ENCODE measurements at regions of chr7 and their contacts with region 1.

Region 1: GRCh38 chr7:63900394-63901203 is 98.0 kb upstream of the ZNF722 start:
- DNase-seq: peak; percentile 90
- H3K4me3 Mint-ChIP-seq: peak overlapping the region; percentile 87
- H3K27ac Mint-ChIP-seq: peak overlapping the region; percentile 80
- H3K4me1 Mint-ChIP-seq: no peaks in the 10 kb centered on the region
- H3K27me3 Mint-ChIP-seq: no peaks in the 10 kb centered on the region

Region 2: DNA sequence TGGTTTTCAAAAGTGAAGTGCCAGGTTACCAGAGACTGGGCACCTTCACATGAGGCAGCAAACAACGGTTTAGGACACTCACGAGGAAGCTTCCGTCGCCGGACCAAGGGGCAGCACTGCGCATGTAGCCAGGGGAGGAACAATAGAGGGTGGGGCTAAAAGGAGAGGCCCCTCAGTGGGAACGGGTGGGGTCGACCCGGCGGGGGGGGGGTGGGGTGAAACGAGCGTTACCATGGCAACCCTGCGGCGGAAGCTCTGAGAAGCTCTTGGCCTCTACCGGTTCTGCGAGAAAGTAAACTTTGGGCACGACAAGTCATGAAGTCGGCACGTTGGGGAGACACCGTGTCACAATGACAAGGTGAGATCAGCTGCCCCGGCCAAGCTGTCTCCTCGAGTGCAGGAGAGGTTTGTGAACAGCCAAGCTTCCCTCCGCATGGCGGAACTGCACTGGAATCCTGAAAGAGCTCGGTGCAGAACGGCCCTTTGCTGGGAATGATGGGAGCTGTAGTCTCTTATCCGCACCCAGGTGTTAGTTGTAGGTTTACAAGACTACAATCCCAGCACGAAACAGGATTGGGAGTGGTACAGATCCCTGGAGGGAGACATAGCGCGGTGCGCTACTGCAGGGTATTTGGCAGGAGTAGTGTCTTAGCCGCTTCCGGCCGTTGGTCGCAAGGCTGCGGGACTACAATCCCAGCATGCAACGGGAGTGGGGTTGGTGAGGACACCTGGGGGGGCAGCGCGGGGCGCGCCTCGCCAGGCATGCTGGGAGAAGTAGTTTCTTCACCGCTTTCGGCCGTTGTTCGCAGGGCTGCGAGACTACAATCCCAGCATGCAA is 25.2 kb after region 1 on chr7:
- intact Hi-C with region 1: loop called (anchors 1 kb)
- DNase-seq: peak; percentile 94
- H3K4me3 Mint-ChIP-seq: peak overlapping the region; percentile 87
- H3K27ac Mint-ChIP-seq: peak overlapping the region; percentile 87
- H3K4me1 Mint-ChIP-seq: peaks cover 1% of the 10 kb centered on the region
- H3K27me3 Mint-ChIP-seq: no peaks in the 10 kb centered on the region